ENCODE measurements at regions of chr15 and their contacts with region 1.

Region 1: DNA sequence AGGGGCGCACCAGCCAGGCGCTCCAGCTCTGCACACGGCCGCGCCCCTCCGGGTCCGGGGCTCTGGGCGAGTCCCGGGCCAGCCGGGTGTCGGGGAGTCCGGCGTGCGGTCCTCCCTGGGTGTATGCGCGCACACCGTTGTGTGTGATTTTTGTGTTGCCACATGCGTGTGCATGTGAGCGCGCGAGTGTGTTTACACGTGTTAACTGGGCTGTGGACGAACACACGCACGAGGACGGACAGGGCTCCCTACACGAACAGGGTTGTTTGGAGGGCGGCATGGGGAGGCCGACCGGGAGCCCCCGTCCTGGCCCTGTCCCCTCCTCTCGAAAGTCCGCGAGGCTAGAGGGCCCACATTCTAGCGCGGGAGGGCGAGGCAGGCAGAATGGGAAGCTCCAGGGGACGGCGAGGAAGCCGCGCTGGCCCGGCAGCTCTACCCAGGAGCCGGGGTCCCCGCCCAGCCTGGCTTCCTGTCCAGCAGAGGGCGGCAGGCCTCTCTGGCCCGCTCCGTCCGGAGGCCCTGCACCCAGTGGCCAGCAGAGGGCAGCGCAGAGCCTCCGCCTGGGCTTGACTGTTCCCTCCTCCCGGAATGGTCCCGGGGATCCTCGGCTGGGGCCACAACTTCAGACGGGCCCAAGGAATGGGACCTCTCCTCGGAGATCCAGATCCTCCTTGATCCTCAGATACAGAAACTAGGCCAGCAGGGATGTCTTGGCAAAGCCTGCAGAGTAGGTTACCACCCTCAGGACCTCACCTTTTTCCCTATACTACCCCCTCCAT is 611 bp upstream of the LINGO1 start:
- DNase-seq: peak; percentile 90 to 95
- ATAC-seq: peak; percentile 70 to 94
- H3K4me3 ChIP-seq: peak overlapping the region; percentile 50
- H3K27ac ChIP-seq: peak overlapping the region; percentile 55 to 88; a peak in 5 of 6 replicates
- H3K4me1 ChIP-seq: peaks cover 10% of the 10 kb centered on the region; the same call in 1 of the 3 replicates
- CTCF ChIP-seq: peak; percentile 100
- EP300 ChIP-seq: no peak
- POLR2A ChIP-seq: no peak; the same call in 1 of the 2 replicates
- RAD21 ChIP-seq: peak; percentile 76 to 86

Region 2: GRCh38 chr15:77118882-77119321 is 514.4 kb before region 1 on chr15:
- CTCF ChIA-PET with region 1: interaction called, 13 read pairs
- POLR2A ChIA-PET with region 1: no interaction called
- DNase-seq: peak; percentile 64 to 74
- ATAC-seq: peak; percentile 83 to 93
- H3K4me3 ChIP-seq: no peak overlapping the region
- H3K27ac ChIP-seq: no peak overlapping the region
- H3K4me1 ChIP-seq: no peaks in the 10 kb centered on the region
- CTCF ChIP-seq: peak; percentile 96
- EP300 ChIP-seq: no peak
- POLR2A ChIP-seq: no peak
- RAD21 ChIP-seq: peak; percentile 93

Region 3: DNA sequence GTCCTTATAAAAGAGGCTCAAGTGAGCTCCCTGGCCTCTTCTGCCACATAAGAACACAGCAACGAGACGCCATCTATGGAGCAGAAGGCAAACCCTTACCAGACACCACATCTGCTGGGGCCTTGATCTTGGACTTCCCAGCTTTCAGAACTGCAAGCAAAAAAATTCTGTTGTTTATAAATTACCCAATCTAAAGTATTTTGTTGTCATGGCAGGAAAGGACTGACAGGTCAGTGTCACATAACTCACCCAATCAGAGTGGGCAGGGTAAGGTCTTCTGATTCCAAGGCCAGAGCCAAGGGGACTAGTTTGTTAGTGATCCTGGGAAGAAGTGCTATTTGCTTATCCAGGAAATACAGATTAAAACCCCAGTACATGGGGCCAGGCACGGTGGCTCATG is 113.8 kb before region 1 on chr15:
- CTCF ChIA-PET with region 1: no interaction called
- POLR2A ChIA-PET with region 1: no interaction called
- DNase-seq: no peak
- ATAC-seq: no peak
- H3K4me3 ChIP-seq: no peak overlapping the region
- H3K27ac ChIP-seq: no peak overlapping the region
- H3K4me1 ChIP-seq: no peaks in the 10 kb centered on the region
- CTCF ChIP-seq: no peak
- EP300 ChIP-seq: no peak
- POLR2A ChIP-seq: no peak
- RAD21 ChIP-seq: no peak

Region 4: GRCh38 chr15:77617476-77618230 is 15.7 kb before region 1 on chr15:
- CTCF ChIA-PET with region 1: interaction called, 48 read pairs
- POLR2A ChIA-PET with region 1: no interaction called
- DNase-seq: peak; percentile 60 to 69
- ATAC-seq: peak; percentile 47 to 84; a peak in 4 of 6 replicates
- H3K4me3 ChIP-seq: no peak overlapping the region
- H3K27ac ChIP-seq: no peak overlapping the region
- H3K4me1 ChIP-seq: no peaks in the 10 kb centered on the region; the same call in 2 of the 3 replicates
- CTCF ChIP-seq: peak; percentile 52
- EP300 ChIP-seq: no peak
- POLR2A ChIP-seq: no peak
- RAD21 ChIP-seq: no peak

Region 5: DNA sequence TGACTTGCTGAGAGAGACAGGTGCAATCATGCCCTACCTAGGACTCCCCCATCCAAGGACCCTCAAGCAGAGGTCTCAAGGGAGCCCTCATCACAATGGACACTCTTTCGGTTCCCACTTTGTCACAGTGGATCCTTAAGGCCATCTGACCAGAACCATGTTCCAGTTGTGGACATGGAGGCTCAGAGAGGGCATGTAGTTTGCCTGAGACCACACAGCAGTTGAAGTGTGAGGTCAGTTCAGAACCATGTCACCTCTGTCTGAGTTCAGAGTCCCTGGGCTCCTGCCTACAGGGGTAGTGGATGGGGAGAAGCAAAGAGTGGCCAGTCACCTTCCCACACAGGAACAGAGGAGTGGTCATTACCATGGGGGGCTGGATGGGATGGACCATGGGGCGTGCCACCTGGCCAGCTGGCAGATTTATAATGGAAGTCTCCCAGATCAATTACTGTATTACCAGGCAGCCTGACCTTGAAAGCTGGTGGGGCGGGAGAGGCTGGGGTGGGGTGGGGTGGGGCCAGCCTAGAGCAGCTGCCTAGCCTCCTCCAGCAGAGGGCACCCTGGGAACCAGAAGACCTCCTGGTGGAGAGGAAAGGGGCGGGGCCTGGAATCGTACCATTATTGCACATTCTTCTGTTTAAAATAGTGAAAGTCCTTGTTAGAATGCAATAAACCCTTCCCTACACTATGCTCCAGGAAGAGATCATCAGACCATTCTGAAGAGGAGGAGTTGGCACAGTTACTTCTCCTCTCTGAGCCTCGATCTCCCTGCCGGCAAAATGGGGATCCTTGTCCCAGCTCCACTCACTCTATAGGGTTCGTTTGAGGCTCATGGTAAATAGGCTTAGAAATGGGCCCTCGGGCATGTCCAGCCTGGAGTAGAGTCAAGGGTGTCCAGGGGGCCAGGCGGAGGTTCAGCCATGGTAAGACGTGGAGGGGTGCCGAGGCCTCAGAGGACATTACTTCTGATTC is 26.3 kb after region 1 on chr15:
- CTCF ChIA-PET with region 1: interaction called, 181 read pairs
- POLR2A ChIA-PET with region 1: no interaction called
- DNase-seq: peak; percentile 67 to 91
- ATAC-seq: peak; percentile 46 to 85; a peak in 5 of 6 replicates
- H3K4me3 ChIP-seq: 0 out of 3 replicates have a peak overlapping the region, but pooled peaks have one; percentile 17
- H3K27ac ChIP-seq: no peak overlapping the region
- H3K4me1 ChIP-seq: no peaks in the 10 kb centered on the region
- CTCF ChIP-seq: peak; percentile 73
- EP300 ChIP-seq: no peak
- POLR2A ChIP-seq: no peak
- RAD21 ChIP-seq: peak; percentile 48 to 63; a peak in 4 of 5 replicates

Region 6: DNA sequence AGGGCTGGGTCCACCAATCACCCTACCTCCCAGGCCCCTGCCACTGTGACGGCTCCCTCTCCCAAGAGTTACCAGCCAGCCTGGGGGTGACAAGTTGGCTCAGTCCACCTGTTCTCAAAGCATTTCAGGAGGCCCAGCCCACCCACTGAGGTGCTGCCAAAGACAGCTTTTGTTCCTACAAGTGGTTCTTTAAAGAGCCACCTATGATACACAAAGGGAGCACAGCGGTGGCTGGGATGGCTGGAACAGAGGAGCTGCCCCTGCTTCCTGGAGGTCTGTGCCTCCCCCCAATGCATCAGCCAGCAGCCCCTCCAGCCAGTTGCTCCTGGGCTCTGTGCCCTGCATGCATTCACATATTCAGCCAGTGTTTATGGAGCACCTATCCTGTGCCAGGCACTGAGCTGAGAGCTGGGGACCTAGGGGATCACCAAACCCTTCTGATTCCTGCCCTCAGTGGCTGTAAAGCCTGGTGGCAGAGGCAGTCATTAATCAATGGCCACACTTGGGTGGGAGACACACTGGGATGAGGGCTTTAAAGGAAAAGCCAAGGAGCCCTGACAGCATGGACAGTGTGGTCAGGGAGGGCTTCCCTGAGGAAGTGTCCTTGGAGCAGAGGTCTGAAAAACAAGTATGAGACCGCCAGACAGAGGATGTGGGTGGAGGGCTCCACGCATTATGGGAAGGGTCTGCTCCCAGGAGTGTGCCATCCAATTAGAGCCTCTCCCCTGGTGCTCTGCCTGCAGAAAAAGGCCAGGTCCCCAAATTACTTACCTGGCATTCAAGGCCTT is 106.5 kb after region 1 on chr15:
- CTCF ChIA-PET with region 1: interaction called, 12 read pairs
- POLR2A ChIA-PET with region 1: no interaction called
- DNase-seq: no peak
- ATAC-seq: no peak
- H3K4me3 ChIP-seq: no peak overlapping the region
- H3K27ac ChIP-seq: no peak overlapping the region
- H3K4me1 ChIP-seq: no peaks in the 10 kb centered on the region
- CTCF ChIP-seq: no peak
- EP300 ChIP-seq: no peak
- POLR2A ChIP-seq: no peak
- RAD21 ChIP-seq: no peak

Region 7: GRCh38 chr15:77798151-77798835 is 165.0 kb after region 1 on chr15:
- CTCF ChIA-PET with region 1: interaction called, 19 read pairs
- POLR2A ChIA-PET with region 1: no interaction called
- DNase-seq: no peak
- ATAC-seq: no peak
- H3K4me3 ChIP-seq: no peak overlapping the region
- H3K27ac ChIP-seq: no peak overlapping the region
- H3K4me1 ChIP-seq: no peaks in the 10 kb centered on the region
- CTCF ChIP-seq: no peak
- EP300 ChIP-seq: no peak
- POLR2A ChIP-seq: no peak
- RAD21 ChIP-seq: no peak

Region 8: GRCh38 chr15:77870195-77871065 is 237.1 kb after region 1 on chr15:
- CTCF ChIA-PET with region 1: interaction called, 33 read pairs
- POLR2A ChIA-PET with region 1: no interaction called
- DNase-seq: peak; percentile 73 to 78
- ATAC-seq: peak; percentile 72 to 88
- H3K4me3 ChIP-seq: no peak overlapping the region
- H3K27ac ChIP-seq: no peak overlapping the region
- H3K4me1 ChIP-seq: peaks cover 7% of the 10 kb centered on the region; the same call in 1 of the 3 replicates
- CTCF ChIP-seq: peak; percentile 53
- EP300 ChIP-seq: no peak
- POLR2A ChIP-seq: no peak
- RAD21 ChIP-seq: peak in 1 of 2 experiments; percentile 38; a peak in 3 of 5 replicates

Region 9: GRCh38 chr15:78023865-78024518 is 390.7 kb after region 1 on chr15:
- CTCF ChIA-PET with region 1: no interaction called
- POLR2A ChIA-PET with region 1: no interaction called
- DNase-seq: no peak
- ATAC-seq: no peak
- H3K4me3 ChIP-seq: no peak overlapping the region
- H3K27ac ChIP-seq: no peak overlapping the region
- H3K4me1 ChIP-seq: no peaks in the 10 kb centered on the region
- CTCF ChIP-seq: no peak
- EP300 ChIP-seq: no peak
- POLR2A ChIP-seq: no peak
- RAD21 ChIP-seq: no peak

Region 10: DNA sequence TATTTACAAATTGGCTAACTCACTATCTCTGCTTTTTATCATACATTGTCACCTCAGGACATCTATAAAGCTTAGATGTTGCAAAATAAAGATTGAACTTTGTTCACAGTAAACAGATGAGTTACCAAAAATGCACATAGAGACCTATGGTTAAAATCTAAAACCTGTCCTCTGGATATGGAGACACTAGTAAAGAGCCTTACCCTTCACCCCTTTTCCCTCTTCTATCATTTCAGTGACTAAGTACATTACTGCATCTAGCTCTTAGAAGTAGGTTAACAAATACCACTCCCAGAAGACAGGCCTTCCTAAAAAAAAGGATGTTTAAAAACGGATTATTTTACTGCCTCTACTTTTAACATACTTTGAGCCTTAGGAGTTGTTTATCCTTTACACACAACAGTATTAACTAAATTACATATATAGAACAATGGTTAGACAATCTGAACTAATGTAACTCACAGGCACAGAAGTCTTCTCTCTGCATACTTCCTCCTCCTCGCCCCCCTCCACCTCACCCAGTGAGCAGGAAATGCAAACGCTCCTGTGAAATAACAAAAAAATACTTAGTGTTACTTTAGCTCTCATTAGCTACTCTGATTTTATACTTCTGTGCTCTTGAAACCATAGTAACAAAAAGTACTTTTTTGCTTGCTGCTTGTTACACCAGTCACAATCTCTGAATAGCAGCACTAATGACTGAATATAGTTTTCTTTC is 828.0 kb after region 1 on chr15:
- CTCF ChIA-PET with region 1: no interaction called
- POLR2A ChIA-PET with region 1: no interaction called
- DNase-seq: no peak
- ATAC-seq: peak; percentile 39 to 66; a peak in 4 of 6 replicates
- H3K4me3 ChIP-seq: no peak overlapping the region
- H3K27ac ChIP-seq: no peak overlapping the region
- H3K4me1 ChIP-seq: peaks cover 37% of the 10 kb centered on the region
- CTCF ChIP-seq: no peak
- EP300 ChIP-seq: no peak
- POLR2A ChIP-seq: no peak
- RAD21 ChIP-seq: no peak

Measured in A549 (cell line).